A549 (cell line): ENCODE measurements at regions of chr14 and their contacts with region 1.

Region 1: GRCh38 chr14:64704143-64704742 is at the start of gene PLEKHG3:
- DNase-seq: peak; percentile 79 to 84
- ATAC-seq: peak; percentile 72 to 83
- H3K4me3 ChIP-seq: peak within 1 kb of the TSS; percentile 72
- H3K27ac ChIP-seq: peak within 1 kb of the TSS; percentile 90 to 95
- H3K4me1 ChIP-seq: peaks cover 58% of the 10 kb centered on the region
- CTCF ChIP-seq: no peak
- EP300 ChIP-seq: no peak
- POLR2A ChIP-seq: no peak; the same call in 1 of the 2 replicates
- RAD21 ChIP-seq: 0 out of 5 replicates have a peak, but pooled peaks of 1 of the 2 experiments have one; percentile 22
- polyA plus RNA-seq, gene PLEKHG3: 29.8 and 30.5 TPM in 2 replicates

Region 2: DNA sequence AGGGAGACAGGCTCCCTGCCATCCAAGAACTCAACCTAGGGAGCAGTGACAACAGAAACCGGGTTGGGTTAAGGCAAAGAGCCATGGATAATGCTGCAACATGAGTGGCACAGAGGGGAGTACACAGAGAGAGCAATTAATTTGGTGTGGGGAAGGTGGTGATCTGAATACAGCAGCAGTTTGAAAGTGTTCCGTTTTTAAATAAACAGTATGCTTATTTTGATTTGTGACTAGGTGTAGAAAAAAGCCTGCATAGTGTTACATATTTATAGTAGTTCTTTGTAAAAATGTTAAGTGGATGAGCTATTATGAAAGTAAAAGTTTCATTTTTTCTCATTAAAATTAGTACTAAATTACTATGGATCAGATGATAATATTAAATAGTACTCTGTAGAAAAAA is 230.2 kb before region 1 on chr14:
- CTCF ChIA-PET with region 1: no interaction called
- POLR2A ChIA-PET with region 1: no interaction called
- DNase-seq: no peak
- ATAC-seq: no peak
- H3K4me3 ChIP-seq: no peak overlapping the region
- H3K27ac ChIP-seq: no peak overlapping the region
- H3K4me1 ChIP-seq: 0 out of 3 replicates have a peak, but pooled peaks cover 4% of the 10 kb centered on the region
- CTCF ChIP-seq: no peak
- EP300 ChIP-seq: no peak
- POLR2A ChIP-seq: no peak
- RAD21 ChIP-seq: no peak

Region 3: DNA sequence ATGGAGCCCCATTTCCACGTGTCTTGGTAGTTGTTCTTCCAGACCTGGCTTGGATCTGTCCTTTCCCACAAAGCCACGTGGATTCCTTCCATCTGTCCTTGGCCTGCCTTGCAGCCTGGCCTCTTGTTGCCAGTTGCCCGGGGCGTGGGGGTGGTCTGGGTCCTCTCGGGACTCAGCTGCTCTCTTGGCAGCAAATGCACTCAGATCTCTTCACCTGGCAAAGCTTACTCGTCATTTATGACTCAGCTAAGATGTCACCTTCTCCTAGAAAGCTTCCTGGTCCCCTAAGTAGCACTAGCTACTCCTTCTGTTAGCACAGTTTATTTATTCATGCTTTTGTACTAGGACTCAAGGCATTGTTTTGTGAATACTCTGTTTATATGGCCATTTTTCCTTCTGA is 13.6 kb after region 1 on chr14:
- CTCF ChIA-PET with region 1: interaction called, 22 read pairs
- POLR2A ChIA-PET with region 1: interaction called, 4 read pairs
- DNase-seq: peak in 1 of 2 experiments; percentile 56
- ATAC-seq: no peak
- H3K4me3 ChIP-seq: no peak overlapping the region
- H3K27ac ChIP-seq: peak overlapping the region; percentile 81 to 84
- H3K4me1 ChIP-seq: peaks cover 77% of the 10 kb centered on the region
- CTCF ChIP-seq: no peak
- EP300 ChIP-seq: no peak; a peak in 1 of 5 replicates
- POLR2A ChIP-seq: no peak
- RAD21 ChIP-seq: no peak

Region 4: DNA sequence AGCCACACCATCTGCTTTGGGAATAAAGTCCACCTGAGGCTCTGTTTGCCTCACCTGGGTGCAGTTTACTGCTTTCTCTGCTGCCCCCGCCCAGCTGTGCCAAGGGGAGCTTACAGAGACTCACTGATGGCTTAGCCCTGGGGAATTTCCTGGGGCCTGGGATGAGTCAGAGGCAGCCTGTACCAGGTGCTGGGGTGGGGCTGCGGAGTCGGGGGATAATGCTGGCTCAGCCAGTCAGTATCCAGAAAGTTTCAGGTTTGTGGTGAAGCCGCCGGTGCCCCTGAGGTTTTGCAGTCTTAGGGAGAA is 22.3 kb after region 1 on chr14:
- CTCF ChIA-PET with region 1: interaction called, 11 read pairs
- POLR2A ChIA-PET with region 1: interaction called, 3 read pairs
- DNase-seq: peak; percentile 52 to 82
- ATAC-seq: peak; percentile 83 to 87
- H3K4me3 ChIP-seq: no peak overlapping the region
- H3K27ac ChIP-seq: peak overlapping the region; percentile 81 to 84
- H3K4me1 ChIP-seq: peaks cover 62% of the 10 kb centered on the region
- CTCF ChIP-seq: no peak
- EP300 ChIP-seq: no peak
- POLR2A ChIP-seq: no peak
- RAD21 ChIP-seq: no peak

Region 5: GRCh38 chr14:64841121-64841651 is 136.9 kb after region 1 on chr14:
- CTCF ChIA-PET with region 1: no interaction called
- POLR2A ChIA-PET with region 1: no interaction called
- DNase-seq: peak; percentile 58 to 69
- ATAC-seq: peak; percentile 97
- H3K4me3 ChIP-seq: no peak overlapping the region
- H3K27ac ChIP-seq: 0 out of 6 replicates have a peak overlapping the region, but pooled peaks of 1 of the 2 experiments have one; percentile 17
- H3K4me1 ChIP-seq: peaks cover 13% of the 10 kb centered on the region; the same call in 1 of the 3 replicates
- CTCF ChIP-seq: peak; percentile 45
- EP300 ChIP-seq: no peak
- POLR2A ChIP-seq: no peak
- RAD21 ChIP-seq: peak in 1 of 2 experiments; percentile 39; a peak in 2 of 5 replicates

Region 6: DNA sequence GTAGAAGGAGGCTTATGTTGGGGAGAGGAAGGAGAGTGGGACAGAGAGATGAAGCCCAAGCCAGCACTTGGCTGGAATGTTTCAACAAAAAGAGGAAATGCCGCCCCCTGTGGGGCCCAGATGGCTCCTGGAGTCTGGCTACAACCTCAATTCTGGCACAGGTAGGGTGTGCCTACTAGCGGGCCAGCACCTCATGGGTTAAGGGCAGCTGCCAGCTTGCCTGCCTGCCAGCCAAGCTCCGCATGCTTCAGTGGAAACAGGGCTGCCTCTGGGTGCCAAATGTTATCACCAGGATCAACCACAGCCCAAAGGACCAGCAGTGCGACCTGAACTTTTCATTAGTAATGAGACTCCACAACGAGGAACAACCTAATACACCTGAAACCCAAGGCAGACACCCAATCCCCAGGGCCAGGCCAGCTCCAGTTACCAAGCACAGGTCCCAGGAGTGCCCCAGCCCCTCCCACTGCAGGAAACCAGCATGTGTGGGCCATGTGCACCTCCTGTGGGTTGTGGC is 256.6 kb after region 1 on chr14:
- CTCF ChIA-PET with region 1: no interaction called
- POLR2A ChIA-PET with region 1: no interaction called
- DNase-seq: no peak
- ATAC-seq: peak; percentile 44 to 66; a peak in 3 of 6 replicates
- H3K4me3 ChIP-seq: no peak overlapping the region
- H3K27ac ChIP-seq: no peak overlapping the region
- H3K4me1 ChIP-seq: no peaks in the 10 kb centered on the region
- CTCF ChIP-seq: no peak
- EP300 ChIP-seq: no peak
- POLR2A ChIP-seq: no peak
- RAD21 ChIP-seq: peak in 1 of 2 experiments; percentile 26; a peak in 1 of 5 replicates